ENCODE measurements at regions of chr17 and their contacts with region 1.

Region 1: GRCh38 chr17:48074315-48075081 is 26.3 kb downstream of the NFE2L1 start:
- DNase-seq: peak; percentile 77
- H3K4me3 ChIP-seq: no peak overlapping the region
- H3K27ac ChIP-seq: peak overlapping the region in 1 of 2 experiments; percentile 33; a peak in 1 of 4 replicates
- H3K4me1 ChIP-seq: no peaks in the 10 kb centered on the region
- H3K27me3 ChIP-seq: no peaks in the 10 kb centered on the region
- CTCF ChIP-seq: peak; percentile 98
- EP300 ChIP-seq: no peak
- RAD21 ChIP-seq: peak; percentile 96

Region 2: DNA sequence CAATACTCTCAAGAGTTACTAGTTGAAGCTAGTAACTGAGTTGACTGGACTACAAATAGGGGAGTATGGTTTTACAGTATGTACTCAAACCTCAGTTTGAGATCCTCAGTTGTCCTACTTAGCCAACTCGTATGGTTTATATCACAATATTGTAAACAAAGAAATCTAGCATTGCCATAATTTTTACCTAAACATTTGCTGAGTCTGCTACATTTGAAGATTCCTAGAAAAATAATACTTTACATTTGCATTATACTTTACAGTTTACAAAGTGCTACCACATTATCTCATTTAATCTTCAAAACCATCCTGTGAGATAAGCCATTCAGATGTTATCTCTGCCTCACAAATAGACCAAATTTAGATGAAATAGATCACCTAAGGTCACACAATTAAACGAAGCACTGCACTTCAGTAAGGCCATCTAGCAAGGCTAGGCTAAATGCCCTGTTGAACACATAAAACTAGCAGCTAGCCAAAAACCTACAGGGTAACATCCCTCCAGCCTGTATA is 10.5 kb after region 1 on chr17:
- CTCF ChIA-PET with region 1: interaction called, 449 read pairs
- POLR2A ChIA-PET with region 1: interaction called, 3 read pairs
- DNase-seq: no peak
- H3K4me3 ChIP-seq: no peak overlapping the region
- H3K27ac ChIP-seq: no peak overlapping the region
- H3K4me1 ChIP-seq: peaks cover 4 to 9% of the 10 kb centered on the region in 2 experiments; a peak in 2 of 4 replicates
- H3K27me3 ChIP-seq: no peaks in the 10 kb centered on the region
- CTCF ChIP-seq: no peak
- EP300 ChIP-seq: no peak
- RAD21 ChIP-seq: no peak

Region 3: DNA sequence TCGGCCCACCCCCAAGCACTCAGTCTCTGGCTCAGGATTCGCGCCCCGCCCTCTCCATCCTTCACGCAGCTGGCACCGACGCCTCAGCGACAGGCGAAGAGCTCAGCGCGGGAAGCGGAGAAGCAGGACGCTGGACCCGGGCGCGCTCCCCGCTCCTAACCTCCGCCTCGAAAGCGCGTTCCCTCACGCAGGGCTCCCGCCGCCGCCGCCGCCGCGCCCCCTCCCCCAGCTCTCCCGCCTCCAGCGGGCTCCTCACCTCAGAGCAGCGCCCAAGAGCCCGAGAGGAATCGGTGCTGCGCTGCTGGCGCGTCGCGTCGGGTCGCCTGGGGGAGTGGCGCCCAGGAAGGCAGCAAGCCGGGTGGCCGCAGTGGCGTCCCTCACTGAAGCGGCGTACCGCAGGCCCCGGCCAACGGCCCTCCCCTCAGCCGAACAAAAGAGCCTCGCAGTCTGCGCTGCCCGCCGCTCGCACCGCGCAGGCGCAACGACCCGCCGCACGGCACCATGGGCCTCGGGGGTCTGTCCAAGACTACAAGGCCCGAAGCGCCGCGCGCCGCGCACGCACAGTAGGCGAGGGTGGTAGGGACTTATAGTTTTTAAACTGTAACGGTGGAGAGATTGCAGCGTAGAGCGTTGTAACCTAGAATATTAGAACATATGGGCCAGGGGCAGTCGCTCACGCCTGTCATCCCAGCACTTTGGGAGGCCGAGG is 26.7 kb after region 1 on chr17 and contains the start of gene CBX1:
- CTCF ChIA-PET with region 1: interaction called, 241 read pairs
- POLR2A ChIA-PET with region 1: no interaction called
- DNase-seq: peak; percentile 98
- H3K4me3 ChIP-seq: peak within 1 kb of the TSS; percentile 66 to 90
- H3K27ac ChIP-seq: peak within 1 kb of the TSS; percentile 81 to 91
- H3K4me1 ChIP-seq: peaks cover 3 to 6% of the 10 kb centered on the region in 2 experiments; a peak in 2 of 4 replicates
- H3K27me3 ChIP-seq: no peaks in the 10 kb centered on the region
- CTCF ChIP-seq: no peak; the same call in 1 of the 2 replicates
- EP300 ChIP-seq: no peak; a peak in 1 of 4 replicates
- RAD21 ChIP-seq: no peak
- polyA plus RNA-seq, gene CBX1: 102 and 112 TPM in 2 replicates

Region 4: GRCh38 chr17:48107168-48108132 is 33.0 kb after region 1 on chr17 and contains the start of gene SNX11:
- CTCF ChIA-PET with region 1: interaction called, 241 read pairs
- POLR2A ChIA-PET with region 1: no interaction called
- DNase-seq: peak; percentile 98
- H3K4me3 ChIP-seq: peak within 1 kb of the TSS; percentile 70 to 89
- H3K27ac ChIP-seq: peak within 1 kb of the TSS; percentile 76 to 92
- H3K4me1 ChIP-seq: peaks cover 4 to 7% of the 10 kb centered on the region in 2 experiments; a peak in 3 of 4 replicates
- H3K27me3 ChIP-seq: no peaks in the 10 kb centered on the region
- CTCF ChIP-seq: peak; percentile 21; the same call in 1 of the 2 replicates
- EP300 ChIP-seq: no peak
- RAD21 ChIP-seq: no peak
- polyA plus RNA-seq, gene SNX11: 19.0 and 31.6 TPM in 2 replicates

Region 5: DNA sequence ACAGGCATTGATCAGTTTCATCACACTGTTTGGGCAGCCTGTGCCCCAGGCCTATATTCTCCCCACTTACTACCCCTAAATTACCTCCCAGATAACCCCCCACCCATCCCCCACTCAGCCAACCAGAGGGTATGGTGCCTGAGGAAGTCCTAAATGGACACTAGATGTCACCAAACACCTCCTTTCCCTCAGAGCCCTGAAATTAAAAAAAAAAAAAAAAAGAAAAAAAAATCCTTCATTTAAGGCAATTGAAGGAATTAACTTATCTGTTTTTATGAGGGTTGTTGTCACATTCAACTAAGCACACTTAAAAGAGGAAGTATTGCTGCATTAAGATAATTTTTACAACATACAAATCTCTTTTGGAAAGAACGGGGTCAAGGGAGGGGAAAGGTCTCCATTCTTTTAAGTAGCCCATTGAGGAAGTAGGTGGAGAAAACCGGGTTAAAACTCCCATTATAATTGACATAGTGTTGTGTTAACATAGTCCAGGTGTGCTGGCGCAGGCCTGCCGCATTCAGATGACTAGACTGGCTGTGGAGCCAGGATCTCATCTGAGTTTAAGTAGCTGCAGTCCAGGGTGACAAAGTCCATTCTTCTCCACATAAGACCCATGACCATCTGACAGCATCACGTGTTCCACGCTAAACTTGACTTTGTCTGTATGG is 79.3 kb after region 1 on chr17:
- CTCF ChIA-PET with region 1: interaction called, 12 read pairs
- POLR2A ChIA-PET with region 1: no interaction called
- DNase-seq: peak; percentile 62
- H3K4me3 ChIP-seq: no peak overlapping the region
- H3K27ac ChIP-seq: no peak overlapping the region
- H3K4me1 ChIP-seq: peaks cover 4 to 6% of the 10 kb centered on the region in 2 experiments; a peak in 3 of 4 replicates
- H3K27me3 ChIP-seq: peaks cover 84% of the 10 kb centered on the region
- CTCF ChIP-seq: peak; percentile 74
- EP300 ChIP-seq: no peak
- RAD21 ChIP-seq: peak; percentile 72

Measured in SK-N-SH (cell line).